Naive thymus-derived CD4-positive, alpha-beta T cell (primary cell): ENCODE measurements at regions of chr7 and their contacts with region 1.

Region 1: DNA sequence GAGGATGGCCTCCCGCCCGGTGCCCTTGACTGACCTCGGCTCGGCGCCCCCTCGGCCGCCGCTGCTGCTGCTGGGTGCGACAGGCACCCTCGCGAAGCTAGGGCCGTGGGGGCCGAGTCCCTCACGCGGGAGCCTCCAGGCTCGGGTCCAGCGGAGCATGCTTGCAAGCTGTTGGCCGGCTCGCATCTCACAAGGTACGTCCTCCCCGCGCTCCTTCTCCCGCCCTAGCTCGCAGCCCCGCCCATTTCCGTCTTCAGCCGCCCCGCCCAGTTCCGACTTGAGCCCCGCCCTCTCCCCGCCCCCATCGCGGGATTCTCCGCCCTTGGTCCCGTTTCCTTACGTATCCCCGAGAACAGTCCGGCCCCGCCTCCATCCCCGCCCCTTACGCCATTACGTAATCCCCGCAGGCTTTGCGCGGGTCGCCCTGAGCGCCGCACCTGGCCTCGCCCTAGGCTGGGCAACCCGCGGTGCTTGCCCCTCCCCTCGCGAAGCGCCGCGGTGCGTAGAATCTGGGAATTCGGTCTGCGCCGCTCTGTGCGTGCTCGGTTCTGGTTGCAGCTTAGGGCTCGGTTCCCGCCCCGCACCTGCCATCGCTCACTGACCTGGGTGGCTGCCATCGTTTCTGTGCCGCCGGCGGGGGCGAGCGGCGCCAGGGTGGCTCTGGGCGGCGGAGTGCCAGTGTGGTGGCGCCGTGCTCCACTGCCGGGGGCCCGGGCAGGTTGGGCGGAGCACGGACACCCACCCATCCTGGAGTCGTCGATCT is at the start of gene ABHD11:
- DNase-seq: peak; percentile 95 to 99 (median 97)
- ATAC-seq: peak; percentile 95
- H3K4me3 ChIP-seq: peak within 1 kb of the TSS; percentile 84
- H3K4me3 Mint-ChIP-seq: peak within 1 kb of the TSS; percentile 83 to 94 (median 91)
- H3K27ac ChIP-seq: peak within 1 kb of the TSS; percentile 89
- H3K27ac Mint-ChIP-seq: peak within 1 kb of the TSS; percentile 79 to 96 (median 93)
- H3K4me1 ChIP-seq: peaks cover 4 to 18% of the 10 kb centered on the region in 2 donors
- H3K4me1 Mint-ChIP-seq: peaks cover 5 to 23% (median 16%) of the 10 kb centered on the region in 7 donors
- H3K27me3 ChIP-seq: no peaks in the 10 kb centered on the region
- H3K27me3 Mint-ChIP-seq: peaks cover 0 to 6% (median 0%) of the 10 kb centered on the region in 5 donors
- total RNA-seq, gene ABHD11: 12.3 to 22.7 (median 17.2) TPM

Region 2: DNA sequence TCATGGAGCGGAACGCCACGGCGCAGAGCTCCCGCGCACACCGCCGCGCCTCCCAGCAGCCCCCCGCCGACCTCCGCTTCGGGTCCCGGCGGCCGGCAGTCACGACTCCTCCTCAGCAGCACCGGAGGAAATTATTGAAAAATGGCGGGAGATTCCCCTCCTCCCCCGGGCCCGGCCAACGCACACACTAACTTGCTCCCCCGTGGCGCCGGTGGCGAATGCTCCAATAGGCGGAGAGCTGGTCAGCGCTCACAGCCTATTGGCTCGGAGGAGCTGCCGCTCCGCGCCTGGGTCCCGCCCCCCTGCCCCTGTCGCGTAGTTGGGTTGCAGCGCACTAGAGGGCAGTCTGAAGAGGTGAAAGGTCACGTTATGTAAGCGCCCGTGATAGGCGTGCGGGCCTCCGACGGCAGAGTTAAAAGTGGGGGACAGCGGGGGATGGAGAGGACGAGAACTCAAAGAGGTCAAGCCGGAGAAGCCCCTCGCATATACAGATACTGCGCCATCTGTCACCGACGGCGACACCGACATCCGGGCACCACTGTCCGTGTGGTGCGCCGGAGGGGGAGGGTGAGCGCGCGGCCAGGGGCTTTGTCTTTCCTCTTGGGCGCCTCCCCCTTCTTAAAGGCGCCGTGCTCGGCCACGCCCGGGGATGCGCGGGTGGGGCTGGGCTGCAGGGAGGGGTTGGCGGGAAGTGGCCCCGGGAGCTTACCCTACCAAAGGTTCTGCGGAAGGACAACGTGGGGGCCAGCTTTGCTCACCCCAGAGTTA is 216.5 kb before region 1 on chr7 and contains the start of gene BAZ1B:
- CTCF ChIA-PET with region 1: no interaction called
- POLR2A ChIA-PET with region 1: interaction called, 5 read pairs
- intact Hi-C with region 1: loop called (anchors 1 kb)
- DNase-seq: peak; percentile 86 to 96 (median 91)
- ATAC-seq: peak; percentile 98
- H3K4me3 ChIP-seq: peak within 1 kb of the TSS; percentile 75
- H3K4me3 Mint-ChIP-seq: peak within 1 kb of the TSS; percentile 91 to 99 (median 96)
- H3K27ac ChIP-seq: peak within 1 kb of the TSS; percentile 85
- H3K27ac Mint-ChIP-seq: peak within 1 kb of the TSS; percentile 95 to 100 (median 98)
- H3K4me1 ChIP-seq: peaks cover 34 to 53% of the 10 kb centered on the region in 2 donors
- H3K4me1 Mint-ChIP-seq: peaks cover 56 to 78% (median 70%) of the 10 kb centered on the region in 7 donors
- H3K27me3 ChIP-seq: no peaks in the 10 kb centered on the region
- H3K27me3 Mint-ChIP-seq: no peaks in the 10 kb centered on the region
- total RNA-seq, gene BAZ1B: 44.7 to 90.3 (median 66.7) TPM

Region 3: DNA sequence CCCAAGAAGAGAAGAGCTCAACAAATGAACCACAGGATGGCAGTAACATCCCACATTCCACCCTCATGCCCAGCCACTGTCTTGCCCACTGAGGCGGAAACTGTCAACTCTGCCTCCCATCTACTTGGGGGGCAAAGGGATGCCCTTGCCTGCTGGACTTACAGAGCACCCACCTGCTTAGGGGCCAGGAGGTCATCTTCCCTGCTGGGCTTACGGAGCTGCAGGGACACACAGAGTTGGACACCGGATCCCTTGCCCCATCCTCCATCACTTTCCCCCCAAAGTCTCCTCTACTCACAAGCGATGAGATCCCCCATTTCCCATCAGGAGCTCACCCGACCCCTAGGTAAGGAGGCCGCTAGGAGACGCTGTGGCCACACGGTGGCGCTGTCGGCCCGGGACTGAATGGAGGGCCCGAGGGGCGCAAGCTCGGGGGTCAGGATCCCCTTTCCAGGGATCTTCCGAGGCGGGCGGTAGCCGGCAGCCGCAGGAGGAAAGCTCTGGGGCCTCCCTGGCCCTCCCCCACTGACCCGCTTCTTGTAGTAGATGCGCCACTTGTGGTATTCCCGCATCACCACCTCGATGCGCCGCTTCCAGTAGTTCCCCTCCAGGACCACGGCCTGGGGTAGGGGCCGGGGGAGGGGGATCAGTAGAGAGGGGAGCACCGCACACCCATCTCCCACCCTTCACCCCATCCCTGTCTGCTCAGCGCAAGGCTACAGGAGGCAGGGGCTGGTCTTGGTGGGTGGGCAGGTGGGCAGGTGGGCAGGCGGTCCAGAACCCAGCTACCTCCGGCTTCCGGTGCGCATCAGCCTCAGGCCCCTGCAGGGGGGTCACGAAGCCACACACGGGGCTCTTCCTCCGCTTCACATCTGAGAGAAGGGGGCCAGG is 131.7 kb before region 1 on chr7:
- CTCF ChIA-PET with region 1: interaction called, 10 read pairs
- POLR2A ChIA-PET with region 1: no interaction called
- intact Hi-C with region 1: loop called (anchors 1 kb)
- DNase-seq: peak; percentile 42 to 77 (median 61)
- ATAC-seq: peak; percentile 85
- H3K4me3 ChIP-seq: no peak overlapping the region
- H3K4me3 Mint-ChIP-seq: no peak overlapping the region
- H3K27ac ChIP-seq: no peak overlapping the region
- H3K27ac Mint-ChIP-seq: peak overlapping the region in 1 of 9 donors; percentile 38
- H3K4me1 ChIP-seq: no peaks in the 10 kb centered on the region
- H3K4me1 Mint-ChIP-seq: peaks cover 0 to 3% (median 0%) of the 10 kb centered on the region in 7 donors
- H3K27me3 ChIP-seq: no peaks in the 10 kb centered on the region
- H3K27me3 Mint-ChIP-seq: peaks cover 4 to 41% (median 20%) of the 10 kb centered on the region in 5 donors

Region 4: GRCh38 chr7:73683056-73683964 is 55.5 kb before region 1 on chr7 and contains the starts of genes BUD23 and DNAJC30:
- CTCF ChIA-PET with region 1: no interaction called
- POLR2A ChIA-PET with region 1: interaction called, 8 read pairs
- intact Hi-C with region 1: loop called (anchors 1 kb)
- DNase-seq: peak; percentile 77 to 97 (median 88)
- ATAC-seq: peak; percentile 98
- H3K4me3 ChIP-seq: peak within 1 kb of the TSS; percentile 97
- H3K4me3 Mint-ChIP-seq: peak within 1 kb of the TSS; percentile 91 to 98 (median 96)
- H3K27ac ChIP-seq: peak within 1 kb of the TSS; percentile 91
- H3K27ac Mint-ChIP-seq: peak within 1 kb of the TSS; percentile 91 to 97 (median 95)
- H3K4me1 ChIP-seq: peaks cover 17% of the 10 kb centered on the region in 2 donors
- H3K4me1 Mint-ChIP-seq: peaks cover 17 to 62% (median 42%) of the 10 kb centered on the region in 7 donors
- H3K27me3 ChIP-seq: no peaks in the 10 kb centered on the region
- H3K27me3 Mint-ChIP-seq: no peaks in the 10 kb centered on the region
- total RNA-seq, gene BUD23: 50.5 to 107 (median 72.0) TPM
- total RNA-seq, gene DNAJC30: 9.5 to 22.4 (median 13.4) TPM

Region 5: GRCh38 chr7:73851410-73852234 is 112.8 kb after region 1 on chr7:
- CTCF ChIA-PET with region 1: interaction called, 7 read pairs
- POLR2A ChIA-PET with region 1: interaction called, 5 read pairs
- intact Hi-C with region 1: loop called in 1 of 2 experiments (anchors 1 kb)
- DNase-seq: peak in 1 of 9 donors; percentile 30
- ATAC-seq: peak; percentile 71
- H3K4me3 ChIP-seq: no peak overlapping the region
- H3K4me3 Mint-ChIP-seq: peak overlapping the region in 1 of 10 donors; percentile 35
- H3K27ac ChIP-seq: no peak overlapping the region
- H3K27ac Mint-ChIP-seq: peak overlapping the region in 1 of 9 donors; percentile 52
- H3K4me1 ChIP-seq: peaks cover 0 to 5% of the 10 kb centered on the region in 2 donors
- H3K4me1 Mint-ChIP-seq: peaks cover 0 to 27% (median 0%) of the 10 kb centered on the region in 7 donors
- H3K27me3 ChIP-seq: peaks cover 0 to 3% of the 10 kb centered on the region in 2 donors
- H3K27me3 Mint-ChIP-seq: peaks cover 0 to 36% (median 3%) of the 10 kb centered on the region in 5 donors

Region 6: GRCh38 chr7:74656837-74657691 is 918.3 kb after region 1 on chr7:
- CTCF ChIA-PET with region 1: no interaction called
- POLR2A ChIA-PET with region 1: no interaction called
- intact Hi-C with region 1: loop called in 1 of 2 experiments (anchors 10 kb)
- DNase-seq: peak; percentile 94 to 97 (median 97)
- ATAC-seq: peak; percentile 88
- H3K4me3 ChIP-seq: peak overlapping the region; percentile 96
- H3K4me3 Mint-ChIP-seq: peak overlapping the region; percentile 90 to 97 (median 94)
- H3K27ac ChIP-seq: peak overlapping the region; percentile 89
- H3K27ac Mint-ChIP-seq: peak overlapping the region; percentile 86 to 98 (median 94)
- H3K4me1 ChIP-seq: peaks cover 12 to 21% of the 10 kb centered on the region in 2 donors
- H3K4me1 Mint-ChIP-seq: peaks cover 35 to 55% (median 43%) of the 10 kb centered on the region in 7 donors
- H3K27me3 ChIP-seq: no peaks in the 10 kb centered on the region
- H3K27me3 Mint-ChIP-seq: peaks cover 0 to 2% (median 0%) of the 10 kb centered on the region in 5 donors